Heart left ventricle (tissue), 16 donors: ENCODE measurements at regions of chr17 and their contacts with region 1.

Region 1: DNA sequence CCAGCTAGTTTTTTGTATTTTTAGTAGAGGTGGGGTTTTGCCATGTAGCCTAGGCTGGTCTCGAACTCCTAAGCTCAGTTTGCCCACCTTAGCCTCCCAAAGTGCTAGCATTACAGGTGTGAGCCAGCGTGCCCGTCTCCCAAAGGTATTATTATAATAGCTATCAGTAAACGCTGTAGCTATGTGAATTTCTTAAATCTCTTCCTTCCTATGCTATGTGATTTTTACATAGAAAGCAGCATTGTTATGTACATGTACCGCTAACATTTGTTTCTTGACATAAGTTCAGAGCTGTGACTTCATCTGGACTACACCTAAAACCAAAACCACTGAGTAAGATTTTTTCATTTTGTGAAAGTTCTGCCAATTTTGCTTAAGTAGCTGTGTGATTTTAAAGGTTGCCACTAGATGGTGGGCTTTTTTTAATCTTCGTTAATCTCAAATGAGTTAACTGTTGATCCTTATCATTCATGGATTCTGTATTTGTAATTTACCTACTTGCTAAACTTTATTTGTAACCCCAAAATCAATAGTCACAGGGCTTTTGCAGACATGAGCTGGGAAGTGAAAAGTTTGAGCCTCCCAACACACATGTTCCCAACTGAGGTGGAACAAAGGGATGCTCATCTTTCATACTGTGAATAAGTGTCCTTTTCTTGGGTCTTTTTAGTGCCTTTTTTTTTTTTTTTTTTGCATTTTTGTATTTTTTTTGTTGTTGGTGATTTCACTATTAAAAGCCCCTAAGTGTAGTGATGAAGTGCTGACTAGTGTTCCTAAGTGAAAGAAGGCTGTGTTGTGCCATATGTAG is 21.9 kb downstream of the PRKAR1A start:
- DNase-seq: no peak
- ATAC-seq: peak in 1 of 4 donors; percentile 10
- H3K4me3 ChIP-seq: no peak overlapping the region
- H3K27ac ChIP-seq: peak overlapping the region in 2 of 12 donors; percentile 1 to 45
- H3K4me1 ChIP-seq: peaks cover 0 to 31% (median 10%) of the 10 kb centered on the region in 12 donors
- H3K27me3 ChIP-seq: no peaks in the 10 kb centered on the region
- CTCF ChIP-seq: peak in 11 of 12 donors; percentile 15 to 53 (median 25)
- POLR2A ChIP-seq: no peak

Region 2: DNA sequence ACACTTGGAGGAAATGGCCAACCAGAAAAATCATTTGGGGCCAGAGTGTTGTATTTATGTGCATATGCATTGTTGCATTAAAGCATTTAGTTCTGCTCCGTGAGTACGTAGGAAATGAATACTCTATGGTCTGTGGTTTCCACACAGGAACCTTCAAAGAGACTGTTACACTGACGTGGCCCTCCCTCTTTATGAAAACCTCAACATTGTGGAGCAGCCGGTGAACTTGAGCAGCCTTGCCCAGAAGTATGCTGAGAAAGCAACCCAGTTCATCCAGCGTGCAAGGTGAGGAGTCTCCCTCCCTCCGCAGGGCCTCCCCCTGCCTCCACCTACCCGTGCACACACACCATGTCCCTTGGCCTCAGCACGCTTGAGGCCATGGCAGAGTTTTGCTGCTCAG is 177.6 kb before region 1 on chr17:
- intact Hi-C with region 1: no loop called
- DNase-seq: no peak
- ATAC-seq: peak in 1 of 4 donors; percentile 48
- H3K4me3 ChIP-seq: no peak overlapping the region
- H3K27ac ChIP-seq: peak overlapping the region in 1 of 12 donors; percentile 62
- H3K4me1 ChIP-seq: peaks cover 0 to 46% (median 0%) of the 10 kb centered on the region in 12 donors
- H3K27me3 ChIP-seq: no peaks in the 10 kb centered on the region
- CTCF ChIP-seq: no peak
- POLR2A ChIP-seq: no peak

Region 3: DNA sequence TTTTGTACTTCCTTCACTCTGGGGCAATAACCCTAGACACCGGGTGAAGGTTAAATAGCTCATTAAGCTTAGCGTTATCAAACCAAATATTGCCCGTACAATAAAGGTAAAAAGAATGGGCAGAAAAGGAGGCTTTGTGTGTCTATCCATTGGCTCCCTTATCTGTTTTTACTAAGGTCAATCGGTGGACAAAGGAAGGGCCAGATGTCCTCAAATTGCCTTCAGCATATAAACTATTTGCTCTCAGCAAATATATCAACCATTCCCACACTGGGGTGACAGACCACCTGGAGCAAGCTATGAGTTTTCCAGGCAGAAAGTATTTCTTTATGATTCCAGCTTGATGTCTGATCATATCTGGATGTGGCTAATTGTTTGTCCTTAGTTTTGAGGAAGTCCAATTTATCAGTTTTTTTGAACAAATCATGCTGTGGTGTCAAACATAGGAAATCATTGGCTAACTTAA is 51.5 kb before region 1 on chr17:
- intact Hi-C with region 1: loop called in 1 of 10 experiments (anchors 5 kb)
- DNase-seq: no peak
- ATAC-seq: no peak
- H3K4me3 ChIP-seq: no peak overlapping the region
- H3K27ac ChIP-seq: no peak overlapping the region
- H3K4me1 ChIP-seq: peaks cover 0 to 27% (median 0%) of the 10 kb centered on the region in 12 donors
- H3K27me3 ChIP-seq: no peaks in the 10 kb centered on the region
- CTCF ChIP-seq: no peak
- POLR2A ChIP-seq: no peak